ENCODE measurements at regions of chr1 and their contacts with region 1.

Region 1: GRCh38 chr1:116724765-116725375 is 29.4 kb upstream of the CD2 start:
- DNase-seq: peak; percentile 74
- H3K4me3 Mint-ChIP-seq: no peak overlapping the region
- H3K27ac Mint-ChIP-seq: no peak overlapping the region
- H3K4me1 Mint-ChIP-seq: no peaks in the 10 kb centered on the region
- H3K27me3 Mint-ChIP-seq: peaks cover 35% of the 10 kb centered on the region
- CTCF ChIP-seq: peak; percentile 16

Region 2: DNA sequence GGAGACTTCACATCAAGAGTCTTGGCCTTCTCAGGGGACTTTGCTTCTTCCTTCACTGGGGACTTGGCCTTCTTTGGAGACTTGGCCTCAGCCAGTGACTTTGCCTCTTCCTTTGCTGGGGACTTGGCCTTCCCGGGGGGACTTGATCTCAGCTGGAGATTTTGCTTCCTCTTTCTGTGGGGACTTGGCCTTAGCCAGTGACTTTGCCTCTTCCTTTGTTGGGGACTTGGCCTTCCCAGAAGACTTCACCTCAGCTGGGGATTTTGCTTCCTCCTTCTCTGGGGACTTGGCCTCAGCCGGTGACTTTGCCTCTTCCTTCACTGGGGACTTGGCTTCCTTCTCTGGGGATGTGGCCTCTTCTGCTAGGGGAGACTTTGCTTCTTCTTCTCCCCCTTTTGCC is 15.9 kb after region 1 on chr1:
- CTCF ChIA-PET with region 1: no interaction called
- intact Hi-C with region 1: no loop called
- DNase-seq: no peak
- H3K4me3 Mint-ChIP-seq: no peak overlapping the region
- H3K27ac Mint-ChIP-seq: no peak overlapping the region
- H3K4me1 Mint-ChIP-seq: no peaks in the 10 kb centered on the region
- H3K27me3 Mint-ChIP-seq: peaks cover 12% of the 10 kb centered on the region
- CTCF ChIP-seq: no peak

Region 3: DNA sequence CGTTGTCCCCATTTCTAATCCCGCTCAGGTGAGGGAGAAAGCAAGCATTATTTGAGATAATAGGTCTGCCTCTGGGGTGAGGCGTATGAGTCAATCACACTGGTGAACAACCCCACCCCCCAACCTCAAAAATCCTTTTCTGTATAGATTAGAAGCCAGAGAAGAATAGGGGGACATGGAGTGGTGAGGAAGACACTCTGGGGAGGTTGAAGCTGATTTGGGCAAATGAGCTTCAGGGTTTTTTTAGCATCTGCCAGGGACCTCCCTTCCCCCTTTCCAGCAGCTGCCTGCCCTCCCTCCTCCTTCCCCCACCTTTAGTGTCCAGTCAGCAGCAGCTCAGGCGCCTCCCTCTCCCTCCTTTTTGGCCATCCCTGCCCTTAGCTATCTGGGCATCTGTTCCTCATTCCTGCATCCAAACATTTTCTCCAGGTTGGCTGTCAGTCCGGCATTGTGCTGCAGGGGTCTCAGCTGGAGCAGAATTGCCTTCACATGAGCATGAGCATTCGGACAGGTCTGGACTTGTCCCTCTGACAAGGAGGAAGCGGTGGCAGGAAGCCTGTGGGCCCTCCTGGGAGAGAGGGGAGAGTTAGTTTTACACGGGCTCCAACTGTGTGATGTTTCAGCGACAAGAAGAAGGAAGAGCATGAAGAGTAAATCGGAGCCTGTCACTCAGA is 154.1 kb after region 1 on chr1:
- CTCF ChIA-PET with region 1: interaction called, 10 read pairs
- intact Hi-C with region 1: no loop called
- DNase-seq: no peak
- H3K4me3 Mint-ChIP-seq: no peak overlapping the region
- H3K27ac Mint-ChIP-seq: no peak overlapping the region
- H3K4me1 Mint-ChIP-seq: no peaks in the 10 kb centered on the region
- H3K27me3 Mint-ChIP-seq: no peaks in the 10 kb centered on the region
- CTCF ChIP-seq: no peak

Measured in Calu3 (cell line).